ENCODE measurements at regions of chr2 and their contacts with region 1.

Region 1: DNA sequence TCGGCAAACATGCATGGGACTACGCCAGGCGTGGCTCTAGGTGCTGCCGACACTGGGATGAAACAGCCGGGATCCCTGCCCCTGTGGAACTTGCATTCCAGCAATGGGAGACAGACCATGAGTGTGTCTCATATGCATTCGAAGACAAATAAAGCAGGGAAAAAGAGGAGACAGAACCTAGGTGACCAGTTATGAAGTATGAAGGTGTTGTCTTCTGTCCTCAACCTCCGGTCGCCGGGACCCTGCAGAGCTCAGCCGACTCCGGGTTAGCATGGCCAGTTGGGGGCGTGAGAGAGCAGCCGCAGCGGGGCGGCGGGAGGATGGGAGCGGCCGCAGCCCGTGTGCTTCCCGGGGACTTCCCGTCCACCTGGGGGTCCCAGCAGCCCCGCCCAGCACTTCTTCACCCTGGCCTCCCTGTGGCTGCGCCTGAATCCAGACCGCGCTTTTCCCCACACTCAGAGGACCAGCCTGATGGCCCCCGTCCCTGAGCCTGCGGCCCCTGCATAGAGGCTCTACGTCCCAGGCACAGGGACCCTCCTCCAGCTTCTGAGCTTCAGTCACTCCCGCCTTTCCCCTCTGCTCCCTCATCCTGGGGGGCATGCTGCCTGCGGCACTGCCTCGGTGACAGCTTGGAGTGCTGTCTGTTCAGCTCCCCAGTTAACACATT is 11.4 kb downstream of the ID2 start:
- DNase-seq: peak in 1 of 2 experiments; percentile 92
- H3K4me3 ChIP-seq: peak overlapping the region; percentile 3 to 48 (median 18); a peak in 5 of 8 replicates
- H3K27ac ChIP-seq: no peak overlapping the region
- H3K4me1 ChIP-seq: peaks cover 0 to 4% (median 0%) of the 10 kb centered on the region in 4 experiments; a peak in 3 of 7 replicates
- H3K27me3 ChIP-seq: no peaks in the 10 kb centered on the region
- CTCF ChIP-seq: peak; percentile 68 to 83 (median 82)
- EP300 ChIP-seq: no peak
- POLR2A ChIP-seq: no peak
- RAD21 ChIP-seq: peak; percentile 41 to 59; a peak in 3 of 4 replicates

Region 2: DNA sequence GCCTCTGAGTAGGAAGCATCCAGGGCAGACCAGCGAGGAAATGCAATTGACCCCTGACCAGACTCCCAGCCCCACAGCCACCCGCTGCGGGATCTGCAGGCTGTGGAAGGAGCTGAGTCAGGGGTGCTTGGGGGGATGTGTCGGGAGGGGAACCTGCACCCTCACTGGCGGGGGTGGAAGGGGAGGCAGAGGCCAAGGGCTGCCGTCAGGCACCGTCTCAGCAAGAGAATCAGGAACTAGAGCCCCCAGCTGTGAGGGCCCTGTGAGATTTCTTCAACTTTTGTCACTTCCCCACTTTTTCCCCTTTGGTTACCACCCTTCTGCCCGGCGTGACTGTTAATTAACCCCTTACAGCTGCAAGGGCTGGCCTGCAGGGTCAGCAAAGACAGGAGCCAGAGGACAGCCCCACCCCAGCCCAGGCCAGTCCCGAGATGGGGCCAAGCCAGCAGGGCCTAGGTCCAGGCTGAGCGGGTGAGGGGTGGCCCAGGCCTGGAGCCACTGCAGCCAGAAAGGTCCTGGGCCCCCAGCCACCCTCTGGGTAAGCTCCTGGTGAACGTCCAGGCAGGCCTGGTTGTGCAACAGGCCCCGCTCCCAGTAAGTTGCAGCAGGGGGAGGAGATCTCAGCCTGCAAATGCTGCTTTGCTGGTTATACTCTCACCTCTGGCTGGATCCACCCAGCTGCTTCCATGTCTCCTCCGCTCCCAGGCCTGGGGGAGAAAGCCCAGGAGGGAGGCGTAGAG is 158.4 kb before region 1 on chr2:
- CTCF ChIA-PET with region 1: interaction called, 12 read pairs
- POLR2A ChIA-PET with region 1: no interaction called
- DNase-seq: no peak
- H3K4me3 ChIP-seq: no peak overlapping the region
- H3K27ac ChIP-seq: no peak overlapping the region; the same call in 1 of the 2 replicates
- H3K4me1 ChIP-seq: peaks cover 0 to 6% (median 0%) of the 10 kb centered on the region in 4 experiments; a peak in 1 of 7 replicates
- H3K27me3 ChIP-seq: no peaks in the 10 kb centered on the region
- CTCF ChIP-seq: no peak
- EP300 ChIP-seq: no peak
- POLR2A ChIP-seq: no peak
- RAD21 ChIP-seq: no peak

Region 3: DNA sequence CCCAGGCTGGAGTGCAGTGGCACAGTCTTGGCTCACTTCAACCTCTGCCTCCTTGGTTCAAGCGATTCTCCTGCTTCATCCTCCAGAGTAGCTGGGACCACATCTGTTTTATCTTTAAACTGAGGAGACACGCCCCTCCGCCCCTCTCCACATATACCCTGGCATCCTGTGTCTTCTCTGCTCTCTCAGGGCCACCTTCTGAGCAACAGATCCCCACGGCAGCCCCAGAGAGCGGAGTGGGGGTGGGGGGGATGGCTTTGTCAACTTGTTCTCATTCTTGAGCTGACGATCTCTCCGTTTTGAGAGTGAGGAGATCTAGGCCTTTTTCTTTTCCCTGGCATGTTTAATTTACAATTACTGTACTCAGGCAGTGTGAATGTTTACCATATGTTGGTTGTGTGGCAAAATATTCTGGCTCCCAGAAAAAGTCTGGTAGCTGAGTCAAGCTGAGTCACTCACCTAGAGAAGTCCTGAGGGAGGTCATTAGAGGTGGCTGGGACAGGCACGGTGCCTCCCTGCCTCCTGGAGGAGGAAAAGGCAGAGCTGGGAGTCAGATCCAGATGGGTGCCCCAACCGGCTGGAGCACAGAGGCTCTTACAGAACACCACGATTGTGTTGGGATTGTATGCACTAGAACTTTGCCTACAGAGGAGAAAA is 30.9 kb before region 1 on chr2:
- CTCF ChIA-PET with region 1: no interaction called
- POLR2A ChIA-PET with region 1: no interaction called
- DNase-seq: no peak
- H3K4me3 ChIP-seq: no peak overlapping the region
- H3K27ac ChIP-seq: no peak overlapping the region
- H3K4me1 ChIP-seq: peaks cover 0 to 3% (median 0%) of the 10 kb centered on the region in 4 experiments; a peak in 1 of 7 replicates
- H3K27me3 ChIP-seq: peaks cover 0 to 2% (median 0%) of the 10 kb centered on the region in 4 experiments; a peak in 1 of 7 replicates
- CTCF ChIP-seq: no peak
- EP300 ChIP-seq: no peak
- POLR2A ChIP-seq: no peak
- RAD21 ChIP-seq: no peak

Region 4: GRCh38 chr2:8710951-8711350 is 17.7 kb after region 1 on chr2:
- CTCF ChIA-PET with region 1: interaction called, 10 read pairs
- POLR2A ChIA-PET with region 1: no interaction called
- DNase-seq: no peak
- H3K4me3 ChIP-seq: no peak overlapping the region
- H3K27ac ChIP-seq: no peak overlapping the region
- H3K4me1 ChIP-seq: no peaks in the 10 kb centered on the region
- H3K27me3 ChIP-seq: no peaks in the 10 kb centered on the region
- CTCF ChIP-seq: no peak
- EP300 ChIP-seq: no peak
- POLR2A ChIP-seq: no peak
- RAD21 ChIP-seq: no peak